Aorta (tissue), 5 donors: ENCODE measurements at regions of chr2 and their contacts with region 1.

Region 1: DNA sequence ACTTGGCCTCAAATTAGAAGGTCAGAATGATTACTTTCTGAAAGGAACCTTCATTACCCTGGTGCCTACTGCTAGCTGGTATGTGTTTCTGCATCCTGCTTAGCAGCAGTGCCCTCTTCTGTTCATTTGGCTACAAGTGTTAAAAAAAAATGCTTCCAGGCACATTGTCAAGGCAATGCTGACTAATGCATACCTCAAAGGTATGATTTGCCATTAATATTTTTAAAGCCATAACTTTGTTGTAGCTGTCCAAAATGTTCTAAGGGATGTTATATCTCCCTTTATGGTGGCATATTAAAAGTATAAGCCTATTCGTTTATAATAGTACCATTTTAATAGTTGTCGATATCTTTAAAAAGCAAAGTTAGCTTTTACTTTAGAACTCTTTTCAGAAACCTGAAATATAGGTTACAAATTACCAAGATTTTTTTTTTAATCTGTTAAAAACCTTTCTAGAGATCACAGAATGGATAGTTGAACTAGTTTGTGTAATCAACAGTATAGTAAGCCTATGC is 52.0 kb upstream of the FAM171B start:
- DNase-seq: no peak
- ATAC-seq: peak; percentile 83
- H3K4me3 ChIP-seq: no peak overlapping the region
- H3K27ac ChIP-seq: no peak overlapping the region
- H3K4me1 ChIP-seq: no peaks in the 10 kb centered on the region
- H3K27me3 ChIP-seq: no peaks in the 10 kb centered on the region

Region 2: GRCh38 chr2:186503848-186504606 is 137.8 kb before region 1 on chr2:
- intact Hi-C with region 1: loop called (anchors 2 kb)
- DNase-seq: no peak
- ATAC-seq: peak; percentile 50
- H3K4me3 ChIP-seq: no peak overlapping the region
- H3K27ac ChIP-seq: no peak overlapping the region
- H3K4me1 ChIP-seq: no peaks in the 10 kb centered on the region
- H3K27me3 ChIP-seq: no peaks in the 10 kb centered on the region

Region 3: GRCh38 chr2:186589612-186590349 is 52.1 kb before region 1 on chr2 and contains the start of gene ITGAV:
- intact Hi-C with region 1: loop called in 1 of 2 experiments (anchors 10 kb)
- DNase-seq: peak; percentile 97
- ATAC-seq: peak; percentile 97
- H3K4me3 ChIP-seq: peak within 1 kb of the TSS; percentile 60 to 78
- H3K27ac ChIP-seq: peak within 1 kb of the TSS; percentile 62 to 88
- H3K4me1 ChIP-seq: peaks cover 0 to 2% of the 10 kb centered on the region in 2 donors
- H3K27me3 ChIP-seq: no peaks in the 10 kb centered on the region
- total RNA-seq, gene ITGAV: 138 to 146 TPM